Common myeloid progenitor, CD34-positive (primary cell): ENCODE measurements at regions of chr7 and their contacts with region 1.

Region 1: DNA sequence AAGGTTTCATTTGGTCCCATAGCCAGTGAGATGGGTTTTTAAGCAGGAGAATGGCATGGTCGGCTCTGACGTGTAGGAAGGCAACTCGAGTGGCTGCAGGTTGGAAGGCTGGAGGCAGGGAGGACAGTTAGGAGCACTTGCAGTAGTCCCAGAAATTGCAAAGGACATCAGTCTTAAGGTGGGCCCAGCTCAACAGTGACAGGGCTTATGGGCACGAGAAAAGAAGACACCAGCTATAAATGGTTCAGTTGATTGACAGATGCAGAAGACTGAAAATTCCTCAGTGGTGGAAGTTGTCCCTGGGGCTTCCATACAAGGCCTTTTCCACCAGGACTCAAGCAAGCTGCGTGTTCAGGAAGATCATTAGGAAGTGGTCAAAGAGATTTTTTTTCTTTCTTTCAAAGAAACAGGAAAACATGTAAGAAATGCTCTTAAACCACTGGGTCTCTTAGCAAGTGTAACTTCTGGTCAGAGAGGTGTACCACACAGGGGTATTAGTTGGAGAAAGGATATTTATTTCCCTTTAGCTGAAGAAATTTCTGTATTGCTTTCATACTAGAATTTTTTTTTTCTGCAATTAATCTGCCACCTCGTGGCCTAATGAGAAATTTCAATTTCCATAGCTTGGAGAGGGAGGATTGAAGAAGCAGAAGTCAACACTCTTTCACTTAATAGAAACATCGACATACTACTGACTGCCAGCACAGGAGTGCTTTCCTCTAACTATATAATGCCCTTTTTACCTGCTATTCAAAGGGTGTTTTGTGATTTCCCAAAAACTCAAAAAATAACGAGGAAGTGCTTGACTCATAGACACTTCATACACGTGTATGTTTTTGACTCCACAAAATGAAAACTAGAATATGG is 177.4 kb upstream of the NAMPT start:
- DNase-seq: peak; percentile 55 to 79 (median 71)
- H3K4me3 ChIP-seq: no peak overlapping the region
- H3K27ac ChIP-seq: no peak overlapping the region
- H3K4me1 ChIP-seq: no peaks in the 10 kb centered on the region
- H3K27me3 ChIP-seq: no peaks in the 10 kb centered on the region

Region 2: GRCh38 chr7:106176414-106177299 is 285.6 kb before region 1 on chr7:
- CTCF ChIA-PET with region 1: interaction called, 83 read pairs
- POLR2A ChIA-PET with region 1: interaction called, 4 read pairs
- DNase-seq: peak; percentile 54 to 71 (median 62)
- H3K4me3 ChIP-seq: no peak overlapping the region
- H3K27ac ChIP-seq: no peak overlapping the region
- H3K4me1 ChIP-seq: peaks cover 0 to 3% (median 0%) of the 10 kb centered on the region in 4 experiments
- H3K27me3 ChIP-seq: peaks cover 0 to 6% (median 3%) of the 10 kb centered on the region in 5 experiments

Region 3: DNA sequence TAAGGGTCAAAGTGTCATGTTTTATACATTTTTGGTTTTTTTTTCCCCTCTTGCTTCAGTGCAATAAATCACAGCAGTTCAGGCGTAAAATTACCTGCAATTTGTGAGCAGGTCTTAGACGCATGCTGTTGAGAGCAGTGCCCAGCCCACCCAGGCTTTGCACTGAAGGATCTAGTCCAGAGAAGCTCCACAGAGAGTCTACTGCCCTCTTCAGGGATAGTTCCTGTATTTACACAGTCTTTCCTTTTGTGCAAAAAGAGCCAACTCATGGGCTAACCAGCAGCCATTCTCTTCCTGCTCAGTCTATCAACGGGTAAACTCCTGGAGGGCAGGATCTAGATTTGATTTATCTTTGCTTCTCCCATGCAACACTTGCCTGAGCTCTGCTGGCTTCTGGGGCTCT is 95.2 kb before region 1 on chr7:
- CTCF ChIA-PET with region 1: no interaction called
- POLR2A ChIA-PET with region 1: no interaction called
- DNase-seq: peak; percentile 23 to 70 (median 65)
- H3K4me3 ChIP-seq: no peak overlapping the region
- H3K27ac ChIP-seq: no peak overlapping the region
- H3K4me1 ChIP-seq: no peaks in the 10 kb centered on the region
- H3K27me3 ChIP-seq: no peaks in the 10 kb centered on the region

Region 4: DNA sequence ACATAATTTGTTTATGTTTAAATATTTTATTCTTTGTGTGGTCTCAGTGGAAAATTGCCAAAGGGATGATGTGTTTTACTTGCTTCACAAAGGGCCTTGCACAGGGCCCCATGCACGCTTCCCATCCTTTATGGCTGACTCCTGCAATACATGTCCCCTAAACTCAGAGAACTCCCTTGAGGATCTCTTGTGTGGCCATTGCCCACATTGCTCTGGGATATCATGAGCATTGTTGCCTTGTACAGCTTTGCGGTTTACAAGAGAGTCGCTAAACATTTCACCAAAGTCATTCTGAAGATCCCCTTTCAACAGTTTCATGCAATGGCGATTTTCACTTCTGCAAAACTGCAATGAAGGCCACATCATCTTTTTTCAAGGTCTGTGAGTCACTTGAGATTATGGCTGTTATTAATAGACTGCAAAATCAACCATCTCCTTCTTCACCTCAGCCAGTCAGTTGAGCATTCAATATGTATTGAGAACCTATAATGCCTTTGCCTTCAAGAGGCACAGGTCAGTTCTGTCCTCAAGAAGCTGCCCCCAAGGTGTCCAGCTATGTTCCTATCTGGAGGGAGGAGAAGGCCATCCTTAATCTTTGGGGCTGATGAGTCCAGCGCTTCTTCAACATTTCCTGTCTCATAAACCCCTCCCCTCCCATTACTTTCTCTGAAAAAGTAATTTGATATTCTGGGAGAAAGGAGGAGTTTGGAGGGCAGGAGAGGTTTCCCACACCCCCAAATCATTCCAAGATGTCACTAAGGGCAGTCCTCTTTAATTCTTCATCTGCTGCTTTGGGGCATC is 90.6 kb after region 1 on chr7:
- CTCF ChIA-PET with region 1: no interaction called
- POLR2A ChIA-PET with region 1: no interaction called
- DNase-seq: peak in 2 of 3 donors; percentile 33 to 39
- H3K4me3 ChIP-seq: no peak overlapping the region
- H3K27ac ChIP-seq: no peak overlapping the region
- H3K4me1 ChIP-seq: no peaks in the 10 kb centered on the region
- H3K27me3 ChIP-seq: no peaks in the 10 kb centered on the region